AG04449 (cell line): ENCODE measurements at regions of chr20 and their contacts with region 1.

Region 1: GRCh38 chr20:48648550-48648951 is 179.2 kb downstream of the PREX1 start:
- DNase-seq: no peak
- H3K4me3 ChIP-seq: no peak overlapping the region
- CTCF ChIP-seq: no peak

Region 2: DNA sequence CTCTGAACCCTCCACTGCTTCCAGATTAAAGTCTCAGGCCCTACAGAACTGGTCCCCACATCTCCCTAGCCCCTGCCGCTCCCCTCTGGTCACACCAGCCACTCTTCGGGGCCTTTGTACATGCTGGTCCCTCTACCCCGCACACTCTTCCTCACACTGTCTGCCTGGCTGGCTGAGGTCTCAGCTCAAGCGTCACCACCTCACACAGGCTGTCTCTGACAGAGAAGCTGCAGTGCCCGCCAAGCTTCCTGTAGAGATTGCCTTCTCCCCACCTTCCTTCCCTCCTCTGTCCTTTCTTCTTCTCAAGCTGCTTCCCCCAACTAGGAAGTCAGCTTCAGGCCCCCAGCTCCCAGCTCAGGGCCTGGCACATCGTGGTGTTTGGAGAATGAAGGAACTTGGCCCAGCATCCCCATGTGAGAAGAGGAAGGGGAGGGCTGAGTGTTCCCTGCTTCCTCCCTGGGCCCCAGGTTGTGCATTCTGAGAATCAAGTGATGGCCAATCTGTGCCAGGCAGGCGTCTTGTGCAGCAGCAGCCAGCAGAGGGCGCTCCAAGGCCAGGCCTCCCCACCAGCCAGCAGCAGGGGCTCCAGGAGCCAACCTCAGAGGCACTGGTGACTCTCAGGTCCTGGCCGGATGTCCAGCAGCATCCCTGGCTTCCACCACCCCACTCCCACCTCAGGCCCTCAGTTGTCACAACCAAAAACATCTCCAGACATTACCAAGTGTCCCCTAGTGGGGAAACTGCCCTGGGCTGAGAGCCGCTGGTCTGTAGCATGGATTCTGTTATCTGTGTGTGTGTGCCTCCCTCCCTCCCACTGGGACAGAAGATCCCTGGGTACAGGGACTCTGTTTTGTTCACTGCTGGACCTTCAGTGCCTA is 12.9 kb before region 1 on chr20:
- CTCF ChIA-PET with region 1: interaction called, 11 read pairs
- POLR2A ChIA-PET with region 1: no interaction called
- DNase-seq: no peak
- H3K4me3 ChIP-seq: no peak overlapping the region
- CTCF ChIP-seq: peak; percentile 96

Region 3: GRCh38 chr20:48733296-48733887 is 84.8 kb after region 1 on chr20:
- CTCF ChIA-PET with region 1: no interaction called
- POLR2A ChIA-PET with region 1: no interaction called
- DNase-seq: peak; percentile 7
- H3K4me3 ChIP-seq: no peak overlapping the region
- CTCF ChIP-seq: no peak